ENCODE measurements at regions of chrX and their contacts with region 1.

Region 1: DNA sequence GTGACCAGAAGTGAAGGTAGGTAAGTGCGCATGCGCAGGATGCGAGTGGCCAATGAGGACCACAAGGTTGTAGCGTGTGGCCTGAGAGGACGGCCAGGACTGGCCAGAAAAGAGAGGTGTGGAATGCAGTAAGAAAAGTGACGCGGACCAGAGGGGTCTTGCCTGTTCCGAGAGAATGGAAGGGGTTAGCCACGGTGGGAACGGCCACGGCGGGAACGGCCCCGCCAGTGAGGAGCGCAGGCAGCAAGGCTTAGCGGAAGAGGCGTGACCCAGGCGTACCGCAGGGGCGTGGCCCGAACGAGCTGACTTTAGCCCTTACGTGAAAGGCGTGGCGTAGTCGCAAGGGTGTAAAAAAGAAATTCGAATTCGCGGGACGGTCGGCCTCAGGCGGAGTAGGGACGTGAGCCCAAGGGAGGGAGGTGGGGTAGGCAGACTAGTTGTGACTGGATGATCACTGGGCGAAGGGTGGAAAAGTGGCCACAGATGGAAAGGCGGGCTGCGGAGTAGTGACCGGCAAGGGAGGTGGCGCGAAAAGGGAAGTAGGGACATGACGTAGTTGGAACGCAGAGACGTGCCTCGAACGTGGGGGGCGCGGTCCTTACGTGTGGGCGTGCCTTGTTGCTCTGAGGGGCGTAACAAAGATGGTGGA is 10.4 kb upstream of the CLTRN start:
- DNase-seq: peak; percentile 90 to 99 (median 98)
- H3K4me3 ChIP-seq: peak overlapping the region; percentile 88 to 92
- H3K4me3 Mint-ChIP-seq: no peak overlapping the region
- H3K27ac ChIP-seq: peak overlapping the region; percentile 100
- H3K27ac Mint-ChIP-seq: no peak overlapping the region
- H3K4me1 ChIP-seq: peaks cover 19% of the 10 kb centered on the region
- H3K4me1 Mint-ChIP-seq: peaks cover 8 to 20% (median 10%) of the 10 kb centered on the region in 4 donors
- H3K27me3 ChIP-seq: no peaks in the 10 kb centered on the region
- H3K27me3 Mint-ChIP-seq: no peaks in the 10 kb centered on the region

Region 2: GRCh38 chrX:15631637-15632036 is 43.3 kb before region 1 on chrX:
- CTCF ChIA-PET with region 1: no interaction called
- POLR2A ChIA-PET with region 1: no interaction called
- intact Hi-C with region 1: no loop called
- DNase-seq: no peak
- H3K4me3 ChIP-seq: no peak overlapping the region
- H3K4me3 Mint-ChIP-seq: no peak overlapping the region
- H3K27ac ChIP-seq: no peak overlapping the region
- H3K27ac Mint-ChIP-seq: no peak overlapping the region
- H3K4me1 ChIP-seq: no peaks in the 10 kb centered on the region
- H3K4me1 Mint-ChIP-seq: peaks cover 0 to 3% (median 0%) of the 10 kb centered on the region in 4 donors
- H3K27me3 ChIP-seq: no peaks in the 10 kb centered on the region
- H3K27me3 Mint-ChIP-seq: peaks cover 5 to 15% of the 10 kb centered on the region in 2 donors

Region 3: GRCh38 chrX:15643786-15644559 is 31.0 kb before region 1 on chrX:
- CTCF ChIA-PET with region 1: no interaction called
- POLR2A ChIA-PET with region 1: no interaction called
- intact Hi-C with region 1: no loop called
- DNase-seq: no peak
- H3K4me3 ChIP-seq: no peak overlapping the region
- H3K4me3 Mint-ChIP-seq: peak overlapping the region in 4 of 8 donors; percentile 3 to 45 (median 40)
- H3K27ac ChIP-seq: no peak overlapping the region
- H3K27ac Mint-ChIP-seq: no peak overlapping the region
- H3K4me1 ChIP-seq: no peaks in the 10 kb centered on the region
- H3K4me1 Mint-ChIP-seq: peaks cover 0 to 10% (median 3%) of the 10 kb centered on the region in 4 donors
- H3K27me3 ChIP-seq: no peaks in the 10 kb centered on the region
- H3K27me3 Mint-ChIP-seq: peaks cover 4 to 8% of the 10 kb centered on the region in 2 donors

Region 4: DNA sequence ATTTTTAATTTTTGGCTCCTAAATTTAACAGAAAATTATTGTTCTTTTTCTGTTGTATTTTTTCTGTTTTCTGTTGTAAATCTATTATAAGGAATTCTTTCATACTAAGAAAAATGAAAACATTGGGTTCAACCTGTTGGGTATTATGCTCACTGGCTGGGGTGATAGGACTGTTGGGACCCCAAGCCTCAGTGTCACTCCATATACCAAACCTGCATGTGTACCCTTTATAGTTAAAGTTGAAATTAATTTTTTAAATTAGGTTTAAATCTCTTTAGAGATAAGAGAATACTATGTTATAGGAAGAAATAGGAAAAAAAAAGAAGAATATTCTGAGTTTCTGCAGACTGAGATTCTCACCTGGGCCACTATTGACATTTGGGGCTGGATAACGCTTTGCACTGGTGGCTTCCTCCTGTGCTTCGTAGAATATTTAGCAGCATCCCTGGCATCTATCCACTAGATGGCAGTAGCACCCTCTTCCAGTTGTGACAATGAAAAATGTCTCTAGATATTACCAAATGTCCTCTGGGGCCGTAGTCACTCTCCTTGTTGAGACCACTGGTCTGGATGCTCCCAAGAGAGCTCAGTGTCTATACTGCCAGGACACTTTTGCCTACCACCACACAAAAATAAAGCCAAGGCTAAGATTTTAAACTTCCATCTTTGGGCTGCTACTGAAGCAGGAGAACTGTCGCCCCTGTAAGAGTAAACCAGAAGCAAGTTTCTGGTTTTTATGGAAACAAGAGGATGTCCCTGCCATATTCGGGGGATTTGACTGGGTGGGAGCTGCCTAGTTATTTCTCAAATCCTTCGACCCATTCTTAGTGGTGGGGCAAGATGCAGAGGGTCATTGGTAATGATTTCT is 12.1 kb after region 1 on chrX:
- CTCF ChIA-PET with region 1: no interaction called
- POLR2A ChIA-PET with region 1: no interaction called
- intact Hi-C with region 1: loop called (anchors 1 kb)
- DNase-seq: peak; percentile 64 to 78 (median 78)
- H3K4me3 ChIP-seq: no peak overlapping the region
- H3K4me3 Mint-ChIP-seq: no peak overlapping the region
- H3K27ac ChIP-seq: no peak overlapping the region
- H3K27ac Mint-ChIP-seq: peak overlapping the region; percentile 30 to 92 (median 66)
- H3K4me1 ChIP-seq: peaks cover 6% of the 10 kb centered on the region
- H3K4me1 Mint-ChIP-seq: peaks cover 7 to 27% (median 13%) of the 10 kb centered on the region in 4 donors
- H3K27me3 ChIP-seq: no peaks in the 10 kb centered on the region
- H3K27me3 Mint-ChIP-seq: no peaks in the 10 kb centered on the region

Region 5: GRCh38 chrX:15749642-15750610 is 75.0 kb after region 1 on chrX:
- CTCF ChIA-PET with region 1: no interaction called
- POLR2A ChIA-PET with region 1: interaction called, 3 read pairs
- intact Hi-C with region 1: loop called (anchors 2 kb)
- DNase-seq: peak; percentile 51 to 63 (median 60)
- H3K4me3 ChIP-seq: peak overlapping the region in 1 of 2 donors; percentile 23
- H3K4me3 Mint-ChIP-seq: peak overlapping the region; percentile 77 to 92 (median 84)
- H3K27ac ChIP-seq: peak overlapping the region; percentile 97
- H3K27ac Mint-ChIP-seq: peak overlapping the region; percentile 91 to 100 (median 97)
- H3K4me1 ChIP-seq: peaks cover 74% of the 10 kb centered on the region
- H3K4me1 Mint-ChIP-seq: peaks cover 58 to 96% (median 83%) of the 10 kb centered on the region in 4 donors
- H3K27me3 ChIP-seq: no peaks in the 10 kb centered on the region
- H3K27me3 Mint-ChIP-seq: no peaks in the 10 kb centered on the region

Region 6: DNA sequence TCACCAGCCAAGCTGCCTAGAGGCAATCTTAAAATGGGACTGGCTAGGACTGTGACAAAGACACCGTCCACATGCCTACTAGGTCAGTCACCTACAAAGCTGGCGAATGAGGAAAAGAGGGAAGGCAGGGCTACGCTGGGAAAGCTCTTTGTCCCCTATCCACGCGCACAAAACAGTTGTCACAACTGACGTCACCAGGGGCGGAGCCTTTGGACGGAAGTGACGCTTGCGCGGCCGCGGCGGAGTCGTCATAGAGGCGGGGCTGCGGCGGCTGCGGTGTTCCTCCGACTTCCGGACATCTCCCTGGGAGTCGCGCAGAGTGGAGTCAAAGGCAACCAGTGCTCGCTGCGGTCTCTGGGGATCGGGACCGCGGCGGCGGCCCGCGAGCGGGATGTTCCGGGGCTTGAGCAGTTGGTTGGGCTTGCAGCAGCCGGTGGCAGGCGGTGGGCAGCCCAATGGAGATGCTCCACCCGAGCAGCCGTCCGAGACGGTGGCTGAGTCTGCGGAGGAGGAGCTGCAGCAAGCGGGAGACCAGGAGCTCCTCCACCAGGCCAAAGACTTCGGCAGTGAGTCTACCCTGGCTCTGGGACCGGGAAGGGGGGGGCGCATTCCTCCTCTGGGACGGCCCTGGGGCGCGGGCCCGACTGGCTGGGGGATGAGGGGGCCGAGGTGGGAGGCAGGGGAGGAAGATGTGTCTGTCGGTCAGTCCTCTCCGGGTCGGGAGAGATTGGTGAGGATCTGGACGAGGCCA is 1044.5 kb after region 1 on chrX and contains the start of gene SYAP1:
- CTCF ChIA-PET with region 1: no interaction called
- POLR2A ChIA-PET with region 1: no interaction called
- intact Hi-C with region 1: loop called (anchors 1 kb)
- DNase-seq: peak; percentile 91 to 100 (median 97)
- H3K4me3 ChIP-seq: peak within 1 kb of the TSS; percentile 54 to 84
- H3K4me3 Mint-ChIP-seq: peak within 1 kb of the TSS; percentile 89 to 99 (median 95)
- H3K27ac ChIP-seq: peak within 1 kb of the TSS; percentile 95
- H3K27ac Mint-ChIP-seq: peak within 1 kb of the TSS; percentile 99 to 100 (median 99)
- H3K4me1 ChIP-seq: peaks cover 8% of the 10 kb centered on the region
- H3K4me1 Mint-ChIP-seq: peaks cover 13 to 55% (median 37%) of the 10 kb centered on the region in 4 donors
- H3K27me3 ChIP-seq: no peaks in the 10 kb centered on the region
- H3K27me3 Mint-ChIP-seq: no peaks in the 10 kb centered on the region
- total RNA-seq, gene SYAP1: 13.9 to 15.4 TPM

Region 7: GRCh38 chrX:16870095-16870860 is 1195.3 kb after region 1 on chrX and contains the start of gene RBBP7:
- CTCF ChIA-PET with region 1: no interaction called
- POLR2A ChIA-PET with region 1: no interaction called
- intact Hi-C with region 1: loop called (anchors 2 kb)
- DNase-seq: peak; percentile 91 to 98 (median 96)
- H3K4me3 ChIP-seq: peak within 1 kb of the TSS; percentile 57 to 65
- H3K4me3 Mint-ChIP-seq: peak within 1 kb of the TSS; percentile 94 to 98 (median 96)
- H3K27ac ChIP-seq: peak within 1 kb of the TSS; percentile 77
- H3K27ac Mint-ChIP-seq: peak within 1 kb of the TSS; percentile 91 to 99 (median 98)
- H3K4me1 ChIP-seq: peaks cover 40% of the 10 kb centered on the region
- H3K4me1 Mint-ChIP-seq: peaks cover 25 to 45% (median 32%) of the 10 kb centered on the region in 4 donors
- H3K27me3 ChIP-seq: no peaks in the 10 kb centered on the region
- H3K27me3 Mint-ChIP-seq: peaks cover 2 to 7% of the 10 kb centered on the region in 2 donors
- total RNA-seq, gene RBBP7: 90.5 to 97.4 TPM

Measured in CD4-positive, alpha-beta memory T cell (primary cell).